ENCODE measurements at regions of chr9 and their contacts with region 1.

Region 1: GRCh38 chr9:126945682-126946081 is 31.1 kb downstream of the RALGPS1 start:
- DNase-seq: no peak
- ATAC-seq: no peak

Region 2: GRCh38 chr9:127201071-127201541 is 255.4 kb after region 1 on chr9:
- intact Hi-C with region 1: loop called (anchors 2 kb)
- DNase-seq: no peak
- ATAC-seq: no peak

Measured in sciatic nerve (tissue), 2 donors.